Caco-2 (cell line): ENCODE measurements at regions of chr13 and their contacts with region 1.

Region 1: GRCh38 chr13:39313721-39314120 is 275.5 kb downstream of the NHLRC3 start:
- DNase-seq: no peak
- H3K4me3 ChIP-seq: no peak overlapping the region
- H3K4me3 Mint-ChIP-seq: no peak overlapping the region
- H3K27ac Mint-ChIP-seq: no peak overlapping the region
- H3K4me1 ChIP-seq: no peaks in the 10 kb centered on the region
- H3K4me1 Mint-ChIP-seq: no peaks in the 10 kb centered on the region
- H3K27me3 ChIP-seq: no peaks in the 10 kb centered on the region
- H3K27me3 Mint-ChIP-seq: peaks cover 11% of the 10 kb centered on the region
- CTCF ChIP-seq: no peak

Region 2: DNA sequence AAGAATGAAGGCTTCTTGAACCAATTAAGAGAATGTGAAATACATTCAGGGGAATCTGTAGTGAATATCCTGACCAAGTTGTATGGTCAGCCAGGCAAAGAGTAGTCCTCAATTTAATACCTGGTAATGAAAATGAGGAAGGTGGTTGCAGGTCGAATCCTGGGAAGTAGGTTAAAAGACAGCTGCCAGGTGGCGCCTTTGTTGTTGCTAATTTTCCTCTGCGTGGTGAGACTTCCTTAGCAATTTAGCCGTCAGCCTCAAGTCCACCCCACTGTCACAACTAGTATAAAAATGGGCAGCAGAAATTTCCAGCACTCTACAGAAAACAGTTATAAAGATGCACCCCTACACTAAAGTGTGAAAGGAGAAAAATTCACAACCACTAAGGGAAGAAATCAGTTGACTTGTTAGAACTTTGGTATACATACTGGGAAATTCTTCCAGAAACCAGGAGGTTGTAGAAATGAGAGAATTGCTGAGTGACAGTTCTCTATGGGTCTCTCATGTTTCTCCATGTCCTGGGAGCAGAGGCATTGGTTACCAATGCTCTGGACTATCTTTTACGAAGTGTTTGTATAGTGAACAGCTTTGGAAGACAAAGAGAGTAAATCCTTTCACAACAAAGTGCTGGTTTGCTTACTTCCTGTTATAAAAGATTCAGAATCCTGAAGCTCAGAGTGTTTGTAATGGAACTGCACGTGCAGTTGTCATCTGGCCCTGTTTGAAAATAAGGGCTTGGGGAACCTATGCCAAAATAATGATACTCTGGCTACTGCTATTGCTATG is 39.6 kb before region 1 on chr13:
- CTCF ChIA-PET with region 1: no interaction called
- POLR2A ChIA-PET with region 1: no interaction called
- intact Hi-C with region 1: loop called (anchors 1 kb)
- DNase-seq: peak in 1 of 2 experiments; percentile 24
- H3K4me3 ChIP-seq: no peak overlapping the region
- H3K4me3 Mint-ChIP-seq: no peak overlapping the region
- H3K27ac Mint-ChIP-seq: no peak overlapping the region
- H3K4me1 ChIP-seq: no peaks in the 10 kb centered on the region
- H3K4me1 Mint-ChIP-seq: no peaks in the 10 kb centered on the region
- H3K27me3 ChIP-seq: no peaks in the 10 kb centered on the region
- H3K27me3 Mint-ChIP-seq: peaks cover 11% of the 10 kb centered on the region
- CTCF ChIP-seq: peak; percentile 15 to 21

Region 3: DNA sequence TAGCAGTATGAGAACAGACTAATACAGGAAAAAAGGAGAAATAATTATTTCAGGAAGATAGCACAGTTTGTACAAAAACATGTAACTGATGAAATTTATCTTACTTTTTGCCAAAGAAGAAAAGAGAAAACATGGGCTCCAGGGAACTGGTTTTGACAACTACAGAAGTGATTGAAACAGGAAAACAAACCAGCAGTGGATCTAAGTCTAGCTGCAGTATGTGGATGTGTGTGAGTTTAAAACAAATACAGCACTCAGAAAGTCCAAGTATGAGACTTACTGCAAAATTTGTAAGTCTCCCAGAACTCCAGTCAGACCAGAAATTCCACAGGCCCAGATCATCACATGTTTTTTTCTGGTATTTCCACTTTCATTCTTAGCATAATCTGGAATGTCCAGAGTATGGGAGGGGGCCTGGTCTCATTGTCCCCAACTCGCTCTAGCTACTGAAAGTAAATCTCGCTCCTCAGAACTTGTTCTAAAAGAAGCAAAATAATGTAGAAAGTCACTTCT is 16.0 kb before region 1 on chr13:
- CTCF ChIA-PET with region 1: no interaction called
- POLR2A ChIA-PET with region 1: no interaction called
- intact Hi-C with region 1: no loop called
- DNase-seq: no peak
- H3K4me3 ChIP-seq: no peak overlapping the region
- H3K4me3 Mint-ChIP-seq: no peak overlapping the region
- H3K27ac Mint-ChIP-seq: no peak overlapping the region
- H3K4me1 ChIP-seq: no peaks in the 10 kb centered on the region
- H3K4me1 Mint-ChIP-seq: no peaks in the 10 kb centered on the region
- H3K27me3 ChIP-seq: no peaks in the 10 kb centered on the region
- H3K27me3 Mint-ChIP-seq: peaks cover 2% of the 10 kb centered on the region
- CTCF ChIP-seq: no peak